ENCODE measurements at regions of chr2 and their contacts with region 1.

Region 1: DNA sequence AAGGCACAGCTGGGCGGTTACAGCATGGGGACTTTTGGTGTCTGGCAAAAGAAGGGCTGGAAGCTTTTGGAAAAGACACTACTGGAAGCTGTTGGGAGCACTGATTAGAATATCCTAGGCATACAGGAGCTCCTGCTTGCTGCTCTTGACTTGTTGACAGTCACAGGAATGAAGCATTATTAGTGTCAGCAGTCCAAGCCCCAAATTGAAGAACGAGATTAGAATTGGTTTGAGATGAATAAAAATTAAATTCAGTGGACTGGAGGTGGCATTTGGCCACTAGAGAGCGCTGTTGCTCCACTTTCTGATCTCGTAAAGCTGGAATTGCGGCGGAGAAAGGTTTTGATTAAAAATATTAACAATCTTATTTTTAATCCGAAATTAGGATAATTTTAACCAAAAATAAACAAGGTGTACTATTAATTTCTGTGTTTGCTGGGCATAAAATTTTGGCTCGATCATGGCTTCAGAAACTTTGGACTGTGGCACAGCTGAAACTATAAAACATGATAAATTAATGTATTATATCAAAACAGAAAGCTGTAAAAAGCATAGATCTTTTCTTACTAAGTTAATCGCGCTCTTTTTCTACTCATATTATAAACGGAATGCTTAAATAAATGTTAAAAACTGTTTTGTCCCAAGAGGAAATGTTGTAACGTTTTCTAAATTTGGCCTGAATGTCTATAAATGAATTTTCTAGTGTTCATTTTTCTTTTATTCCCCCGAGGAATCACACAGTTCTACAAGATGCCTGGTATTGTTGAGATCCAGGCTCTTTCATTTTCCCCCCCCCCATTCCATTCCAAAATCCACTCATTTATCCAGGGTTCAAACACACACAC is 2.4 kb upstream of the HOXD8 start:
- DNase-seq: peak; percentile 36 to 81 (median 74)
- ATAC-seq: no peak
- H3K4me3 ChIP-seq: no peak overlapping the region
- H3K4me3 Mint-ChIP-seq: no peak overlapping the region
- H3K27ac ChIP-seq: no peak overlapping the region
- H3K27ac Mint-ChIP-seq: no peak overlapping the region
- H3K4me1 ChIP-seq: peaks cover 36% of the 10 kb centered on the region
- H3K4me1 Mint-ChIP-seq: peaks cover 31% of the 10 kb centered on the region
- H3K27me3 ChIP-seq: peaks cover 68 to 72% of the 10 kb centered on the region in 2 experiments
- H3K27me3 Mint-ChIP-seq: peaks cover 71% of the 10 kb centered on the region
- CTCF ChIP-seq: peak; percentile 99

Region 2: GRCh38 chr2:175948191-175948590 is 179.0 kb before region 1 on chr2:
- CTCF ChIA-PET with region 1: no interaction called
- POLR2A ChIA-PET with region 1: no interaction called
- intact Hi-C with region 1: no loop called
- DNase-seq: no peak
- ATAC-seq: no peak
- H3K4me3 ChIP-seq: no peak overlapping the region
- H3K4me3 Mint-ChIP-seq: no peak overlapping the region
- H3K27ac ChIP-seq: no peak overlapping the region
- H3K27ac Mint-ChIP-seq: no peak overlapping the region
- H3K4me1 ChIP-seq: no peaks in the 10 kb centered on the region
- H3K4me1 Mint-ChIP-seq: no peaks in the 10 kb centered on the region
- H3K27me3 ChIP-seq: no peaks in the 10 kb centered on the region
- H3K27me3 Mint-ChIP-seq: no peaks in the 10 kb centered on the region
- CTCF ChIP-seq: no peak

Region 3: GRCh38 chr2:176001916-176002687 is 125.0 kb before region 1 on chr2 and contains the start of gene LNPK:
- CTCF ChIA-PET with region 1: no interaction called
- POLR2A ChIA-PET with region 1: no interaction called
- intact Hi-C with region 1: no loop called
- DNase-seq: peak; percentile 84 to 95 (median 92)
- ATAC-seq: peak; percentile 88
- H3K4me3 ChIP-seq: peak within 1 kb of the TSS; percentile 69 to 79
- H3K4me3 Mint-ChIP-seq: peak within 1 kb of the TSS; percentile 90
- H3K27ac ChIP-seq: peak within 1 kb of the TSS; percentile 63 to 71
- H3K27ac Mint-ChIP-seq: peak within 1 kb of the TSS; percentile 97
- H3K4me1 ChIP-seq: peaks cover 10% of the 10 kb centered on the region
- H3K4me1 Mint-ChIP-seq: peaks cover 31% of the 10 kb centered on the region
- H3K27me3 ChIP-seq: no peaks in the 10 kb centered on the region
- H3K27me3 Mint-ChIP-seq: no peaks in the 10 kb centered on the region
- CTCF ChIP-seq: no peak
- total RNA-seq, gene LNPK: 16.9 TPM

Region 4: GRCh38 chr2:176096986-176097819 is 29.9 kb before region 1 on chr2:
- CTCF ChIA-PET with region 1: interaction called, 20 read pairs
- POLR2A ChIA-PET with region 1: no interaction called
- intact Hi-C with region 1: no loop called
- DNase-seq: peak in 8 of 9 experiments; percentile 25 to 76 (median 56)
- ATAC-seq: peak; percentile 76
- H3K4me3 ChIP-seq: peak overlapping the region; percentile 38 to 51
- H3K4me3 Mint-ChIP-seq: peak overlapping the region; percentile 71
- H3K27ac ChIP-seq: no peak overlapping the region
- H3K27ac Mint-ChIP-seq: no peak overlapping the region
- H3K4me1 ChIP-seq: peaks cover 27% of the 10 kb centered on the region
- H3K4me1 Mint-ChIP-seq: peaks cover 24% of the 10 kb centered on the region
- H3K27me3 ChIP-seq: peaks cover 75 to 85% of the 10 kb centered on the region in 2 experiments
- H3K27me3 Mint-ChIP-seq: peaks cover 81% of the 10 kb centered on the region
- CTCF ChIP-seq: peak; percentile 77

Region 5: DNA sequence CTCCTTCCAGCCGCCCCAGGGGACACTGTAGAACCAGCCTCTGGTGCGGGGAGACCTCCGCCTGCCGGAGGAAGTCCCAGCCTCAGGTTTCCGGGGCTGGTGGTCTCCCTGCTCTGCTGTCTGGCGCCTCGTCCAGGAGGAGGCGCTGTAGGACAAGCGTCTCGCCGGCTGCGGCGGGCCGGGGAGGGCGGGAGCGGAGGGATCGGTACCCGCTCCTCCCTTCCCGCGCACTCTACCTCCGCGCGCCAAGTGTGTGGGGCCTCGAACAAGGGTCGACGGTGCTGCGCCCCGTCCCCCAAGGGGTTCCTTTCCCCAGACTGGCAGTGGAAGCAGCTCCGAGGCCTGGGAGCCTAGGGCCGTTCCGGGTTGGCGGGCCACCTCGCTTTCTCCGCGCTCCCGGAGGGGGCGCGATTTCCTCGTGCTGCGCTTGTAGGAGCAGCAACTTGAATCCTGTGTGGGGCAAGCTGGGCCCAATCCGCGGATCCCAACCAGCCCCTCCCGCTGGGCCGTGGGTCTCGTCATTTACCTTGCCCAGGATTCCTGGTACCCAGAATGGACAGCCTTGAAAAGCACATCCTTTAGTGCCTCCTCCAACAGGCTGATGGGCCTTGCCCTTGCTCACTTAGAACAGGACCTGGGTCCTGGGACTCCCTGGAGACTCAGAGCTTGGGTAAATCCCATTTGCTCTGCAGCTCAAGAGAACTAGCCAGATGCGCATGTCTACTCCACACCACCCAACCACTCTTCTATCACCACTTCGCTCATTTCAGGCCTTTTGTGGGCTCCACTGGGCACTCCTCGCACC is 13.6 kb after region 1 on chr2:
- CTCF ChIA-PET with region 1: interaction called, 32 read pairs
- POLR2A ChIA-PET with region 1: no interaction called
- intact Hi-C with region 1: no loop called
- DNase-seq: peak; percentile 37 to 84 (median 75)
- ATAC-seq: peak; percentile 93
- H3K4me3 ChIP-seq: peak overlapping the region; percentile 28 to 38
- H3K4me3 Mint-ChIP-seq: peak overlapping the region; percentile 8
- H3K27ac ChIP-seq: no peak overlapping the region
- H3K27ac Mint-ChIP-seq: no peak overlapping the region
- H3K4me1 ChIP-seq: peaks cover 22% of the 10 kb centered on the region
- H3K4me1 Mint-ChIP-seq: peaks cover 32% of the 10 kb centered on the region
- H3K27me3 ChIP-seq: peaks cover 46 to 47% of the 10 kb centered on the region in 2 experiments
- H3K27me3 Mint-ChIP-seq: peaks cover 80% of the 10 kb centered on the region
- CTCF ChIP-seq: peak; percentile 76

Region 6: GRCh38 chr2:176638167-176639015 is 511.2 kb after region 1 on chr2:
- CTCF ChIA-PET with region 1: interaction called, 18 read pairs
- POLR2A ChIA-PET with region 1: no interaction called
- intact Hi-C with region 1: loop called (anchors 1 to 2 kb)
- DNase-seq: peak; percentile 19 to 74 (median 59)
- ATAC-seq: peak; percentile 87
- H3K4me3 ChIP-seq: peak overlapping the region; percentile 48 to 55
- H3K4me3 Mint-ChIP-seq: peak overlapping the region; percentile 71
- H3K27ac ChIP-seq: no peak overlapping the region
- H3K27ac Mint-ChIP-seq: no peak overlapping the region
- H3K4me1 ChIP-seq: no peaks in the 10 kb centered on the region
- H3K4me1 Mint-ChIP-seq: peaks cover 8% of the 10 kb centered on the region
- H3K27me3 ChIP-seq: peaks cover 9 to 23% of the 10 kb centered on the region in 2 experiments
- H3K27me3 Mint-ChIP-seq: peaks cover 66% of the 10 kb centered on the region
- CTCF ChIP-seq: peak; percentile 76

Region 7: DNA sequence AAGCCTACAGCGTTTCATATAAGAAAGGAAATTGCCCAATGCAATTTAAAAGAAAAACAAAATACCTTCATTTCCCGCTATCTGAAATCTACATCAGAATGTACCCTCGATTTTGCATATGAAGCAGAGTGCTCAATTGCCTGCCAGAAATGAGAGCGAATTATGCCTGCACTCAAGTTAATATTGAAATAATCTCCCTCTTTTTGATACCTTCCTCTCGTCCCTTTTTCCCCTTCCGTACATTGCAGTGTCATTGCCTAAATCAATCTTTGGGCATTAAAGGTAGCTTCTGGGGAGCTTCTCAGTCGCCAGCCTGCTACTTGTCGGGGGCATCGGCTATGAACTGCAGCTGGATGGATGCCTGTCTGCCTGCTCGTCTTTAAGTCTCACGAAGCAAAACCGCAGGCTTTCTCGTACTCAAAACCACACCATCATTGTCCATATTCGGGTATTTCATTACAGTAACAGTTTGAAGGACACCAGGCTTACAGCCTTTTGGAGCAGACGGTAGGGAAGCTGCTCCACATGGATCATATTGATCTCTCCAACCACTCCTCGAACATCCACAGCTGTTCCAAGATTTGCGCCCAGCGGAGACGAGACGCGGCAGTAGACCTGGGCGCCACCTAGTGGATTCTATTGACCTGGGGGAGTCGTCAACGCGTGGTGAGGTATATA is 1021.5 kb after region 1 on chr2:
- CTCF ChIA-PET with region 1: interaction called, 39 read pairs
- POLR2A ChIA-PET with region 1: no interaction called
- intact Hi-C with region 1: loop called (anchors 1 to 2 kb)
- DNase-seq: peak; percentile 47 to 84 (median 75)
- ATAC-seq: peak; percentile 89
- H3K4me3 ChIP-seq: peak overlapping the region; percentile 58 to 69
- H3K4me3 Mint-ChIP-seq: peak overlapping the region; percentile 86
- H3K27ac ChIP-seq: no peak overlapping the region
- H3K27ac Mint-ChIP-seq: no peak overlapping the region
- H3K4me1 ChIP-seq: peaks cover 11% of the 10 kb centered on the region
- H3K4me1 Mint-ChIP-seq: peaks cover 14% of the 10 kb centered on the region
- H3K27me3 ChIP-seq: peaks cover 6 to 14% of the 10 kb centered on the region in 2 experiments
- H3K27me3 Mint-ChIP-seq: peaks cover 29% of the 10 kb centered on the region
- CTCF ChIP-seq: peak; percentile 94

Region 8: GRCh38 chr2:177618255-177619253 is 1491.4 kb after region 1 on chr2:
- CTCF ChIA-PET with region 1: no interaction called
- POLR2A ChIA-PET with region 1: no interaction called
- intact Hi-C with region 1: loop called in 1 of 2 experiments (anchors 10 kb)
- DNase-seq: peak; percentile 80 to 96 (median 91)
- ATAC-seq: peak; percentile 89
- H3K4me3 ChIP-seq: peak overlapping the region; percentile 89 to 93
- H3K4me3 Mint-ChIP-seq: peak overlapping the region; percentile 97
- H3K27ac ChIP-seq: peak overlapping the region; percentile 97 to 99
- H3K27ac Mint-ChIP-seq: peak overlapping the region; percentile 98
- H3K4me1 ChIP-seq: peaks cover 8% of the 10 kb centered on the region
- H3K4me1 Mint-ChIP-seq: peaks cover 7% of the 10 kb centered on the region
- H3K27me3 ChIP-seq: no peaks in the 10 kb centered on the region
- H3K27me3 Mint-ChIP-seq: no peaks in the 10 kb centered on the region
- CTCF ChIP-seq: no peak

Measured in CD8-positive, alpha-beta T cell (primary cell).